GM18951 (cell line): ENCODE measurements at regions of chr21 and their contacts with region 1.

Region 1: GRCh38 chr21:30793581-30794314 is 19.3 kb downstream of the KRTAP8-1 start:
- POLR2A ChIP-seq: no peak

Region 2: DNA sequence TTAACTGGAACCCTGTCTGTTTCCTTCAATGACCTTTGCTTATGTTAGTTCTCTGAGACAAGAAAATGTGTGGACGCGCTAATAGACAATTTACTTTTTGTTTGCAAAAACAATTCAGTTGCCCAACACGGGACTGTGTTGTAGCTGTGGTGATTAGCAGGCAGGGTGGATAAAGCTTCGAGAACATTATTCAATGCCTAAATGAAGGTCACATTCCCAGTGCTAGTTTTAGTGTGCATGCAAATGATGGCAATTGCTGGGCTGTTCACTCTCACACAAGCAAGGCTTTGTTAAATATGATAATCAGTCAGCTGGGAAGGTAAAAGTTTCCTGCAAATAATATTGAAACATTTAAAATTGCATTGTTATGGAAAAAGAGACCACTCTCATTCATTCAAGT is 1306.6 kb before region 1 on chr21:
- in situ Hi-C with region 1: no loop called
- POLR2A ChIP-seq: no peak

Region 3: DNA sequence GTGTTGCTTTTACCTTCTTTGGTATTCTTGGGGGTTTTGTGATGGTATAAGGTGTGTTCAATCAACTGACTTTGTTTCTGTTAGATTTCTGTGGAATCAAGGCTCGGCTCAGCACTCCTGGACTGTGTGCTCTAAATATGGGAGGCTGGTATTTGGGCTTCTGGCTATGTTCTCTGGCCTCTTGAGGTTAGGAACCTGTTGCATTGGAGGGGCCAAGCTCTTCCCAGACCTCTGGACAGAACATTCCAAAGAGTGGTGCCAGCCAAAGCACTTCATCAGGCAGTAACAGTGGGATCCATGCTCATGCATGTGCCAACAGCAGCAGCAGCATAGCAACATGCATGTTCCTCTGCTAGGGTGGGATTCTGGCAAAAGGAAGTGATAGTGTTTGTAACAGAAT is 241.0 kb before region 1 on chr21:
- in situ Hi-C with region 1: no loop called
- POLR2A ChIP-seq: no peak

Region 4: DNA sequence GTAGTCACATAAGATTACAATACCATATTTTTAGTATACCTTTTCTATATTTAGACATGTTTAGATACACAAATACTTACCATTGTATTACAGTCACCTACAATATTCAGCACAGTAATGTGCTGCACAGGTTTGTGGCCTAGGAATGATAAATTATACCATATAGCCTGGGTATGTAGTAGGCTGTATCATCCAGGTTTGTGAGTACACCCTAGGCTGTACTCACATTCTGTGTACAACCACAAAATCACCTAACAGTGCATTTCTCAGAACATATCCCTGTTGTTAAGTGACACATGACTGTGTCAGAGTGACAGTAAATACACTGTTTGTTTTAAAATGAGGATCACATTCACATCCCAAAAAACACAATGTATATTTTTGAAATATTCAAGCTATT is 86.3 kb before region 1 on chr21:
- in situ Hi-C with region 1: loop called (anchors 10 kb)
- POLR2A ChIP-seq: no peak